Panc1 (cell line): ENCODE measurements at regions of chr14 and their contacts with region 1.

Region 1: GRCh38 chr14:22099942-22100763 is 426.5 kb upstream of the OR4E1 start:
- DNase-seq: peak; percentile 53
- ATAC-seq: peak; percentile 84
- H3K4me3 ChIP-seq: no peak overlapping the region
- H3K27ac ChIP-seq: no peak overlapping the region
- H3K4me1 ChIP-seq: no peaks in the 10 kb centered on the region
- H3K27me3 ChIP-seq: no peaks in the 10 kb centered on the region
- CTCF ChIP-seq: peak; percentile 74

Region 2: GRCh38 chr14:21997300-21997699 is 102.9 kb before region 1 on chr14:
- CTCF ChIA-PET with region 1: interaction called, 3 read pairs
- POLR2A ChIA-PET with region 1: no interaction called
- in situ Hi-C with region 1: no loop called
- intact Hi-C with region 1: loop called (anchors 10 kb)
- DNase-seq: no peak
- ATAC-seq: no peak; the same call in 1 of the 2 replicates
- H3K4me3 ChIP-seq: no peak overlapping the region
- H3K27ac ChIP-seq: no peak overlapping the region
- H3K4me1 ChIP-seq: no peaks in the 10 kb centered on the region
- H3K27me3 ChIP-seq: no peaks in the 10 kb centered on the region
- CTCF ChIP-seq: peak; percentile 43; the same call in 1 of the 2 replicates

Region 3: GRCh38 chr14:22159099-22159498 is 58.9 kb after region 1 on chr14:
- CTCF ChIA-PET with region 1: no interaction called
- POLR2A ChIA-PET with region 1: no interaction called
- in situ Hi-C with region 1: no loop called
- intact Hi-C with region 1: no loop called
- DNase-seq: no peak
- ATAC-seq: no peak
- H3K4me3 ChIP-seq: no peak overlapping the region
- H3K27ac ChIP-seq: no peak overlapping the region
- H3K4me1 ChIP-seq: no peaks in the 10 kb centered on the region
- H3K27me3 ChIP-seq: no peaks in the 10 kb centered on the region; the same call in 1 of the 2 replicates
- CTCF ChIP-seq: no peak